Aorta (tissue), 5 donors: ENCODE measurements at regions of chr5 and their contacts with region 1.

Region 1: GRCh38 chr5:134586866-134587524 is 45.6 kb downstream of the SAR1B start:
- DNase-seq: peak; percentile 90 to 96
- ATAC-seq: peak; percentile 93
- H3K4me3 ChIP-seq: no peak overlapping the region
- H3K27ac ChIP-seq: peak overlapping the region in 1 of 2 donors; percentile 18
- H3K4me1 ChIP-seq: no peaks in the 10 kb centered on the region
- H3K27me3 ChIP-seq: no peaks in the 10 kb centered on the region

Region 2: DNA sequence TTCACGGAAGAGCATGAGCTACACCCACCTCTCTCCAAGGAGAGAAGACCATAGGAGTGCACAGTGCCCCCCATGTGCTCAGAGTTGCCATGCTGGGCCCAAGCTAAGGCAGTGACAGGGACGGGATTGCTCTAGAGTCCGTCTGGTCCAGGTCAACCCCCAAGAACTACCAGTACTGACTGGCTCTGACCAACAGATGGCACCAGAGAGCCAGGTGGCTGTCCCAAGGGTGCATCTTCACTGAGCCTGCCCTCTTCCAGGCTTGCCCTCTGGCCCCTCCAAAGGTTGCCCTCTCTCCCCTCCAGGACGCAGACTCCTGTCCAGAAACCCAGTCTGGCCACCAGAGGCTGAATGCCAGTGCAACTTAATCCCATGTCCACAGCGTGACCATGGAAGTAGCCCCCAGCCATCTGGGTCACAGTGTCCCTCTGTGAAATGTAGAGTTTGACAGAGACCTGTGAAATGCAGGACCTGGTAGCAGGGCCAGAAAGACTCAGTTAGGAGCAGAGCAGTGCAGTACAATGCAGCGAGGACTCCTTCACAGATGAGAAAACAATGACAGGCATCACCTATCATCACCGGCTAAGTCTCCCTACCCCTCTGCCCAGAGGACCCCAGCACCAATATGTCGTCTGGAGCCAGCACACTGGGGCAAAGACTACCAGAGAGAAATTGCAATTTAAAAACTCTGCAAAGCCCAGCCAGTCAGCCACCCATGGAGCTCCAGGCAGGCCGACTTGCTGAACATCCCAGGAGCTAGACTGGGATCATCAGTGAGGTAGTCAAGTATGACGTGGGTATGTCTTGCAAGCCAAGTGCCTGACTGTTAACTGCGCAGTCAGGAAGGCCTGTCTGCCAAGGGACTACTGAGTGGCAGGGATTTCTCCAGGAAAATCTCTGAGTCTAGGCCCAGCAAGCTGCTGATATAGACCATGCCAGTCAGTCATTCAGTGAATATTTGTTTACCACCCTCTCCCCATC is 402.6 kb before region 1 on chr5:
- intact Hi-C with region 1: loop called in 1 of 2 experiments (anchors 10 kb)
- DNase-seq: peak; percentile 77 to 84
- ATAC-seq: peak; percentile 90
- H3K4me3 ChIP-seq: no peak overlapping the region
- H3K27ac ChIP-seq: no peak overlapping the region
- H3K4me1 ChIP-seq: no peaks in the 10 kb centered on the region
- H3K27me3 ChIP-seq: no peaks in the 10 kb centered on the region

Region 3: GRCh38 chr5:134304311-134304710 is 282.7 kb before region 1 on chr5:
- intact Hi-C with region 1: loop called (anchors 5 kb)
- DNase-seq: no peak
- ATAC-seq: no peak
- H3K4me3 ChIP-seq: no peak overlapping the region
- H3K27ac ChIP-seq: no peak overlapping the region
- H3K4me1 ChIP-seq: no peaks in the 10 kb centered on the region
- H3K27me3 ChIP-seq: no peaks in the 10 kb centered on the region

Region 4: GRCh38 chr5:134370871-134371833 is 215.8 kb before region 1 on chr5 and contains the start of gene UBE2B:
- intact Hi-C with region 1: loop called in 1 of 2 experiments (anchors 5 kb)
- DNase-seq: peak; percentile 98 to 99
- ATAC-seq: peak; percentile 99
- H3K4me3 ChIP-seq: peak within 1 kb of the TSS; percentile 65 to 79
- H3K27ac ChIP-seq: peak within 1 kb of the TSS; percentile 86 to 99
- H3K4me1 ChIP-seq: no peaks in the 10 kb centered on the region
- H3K27me3 ChIP-seq: no peaks in the 10 kb centered on the region
- total RNA-seq, gene UBE2B: 96.6 to 99.2 TPM

Region 5: DNA sequence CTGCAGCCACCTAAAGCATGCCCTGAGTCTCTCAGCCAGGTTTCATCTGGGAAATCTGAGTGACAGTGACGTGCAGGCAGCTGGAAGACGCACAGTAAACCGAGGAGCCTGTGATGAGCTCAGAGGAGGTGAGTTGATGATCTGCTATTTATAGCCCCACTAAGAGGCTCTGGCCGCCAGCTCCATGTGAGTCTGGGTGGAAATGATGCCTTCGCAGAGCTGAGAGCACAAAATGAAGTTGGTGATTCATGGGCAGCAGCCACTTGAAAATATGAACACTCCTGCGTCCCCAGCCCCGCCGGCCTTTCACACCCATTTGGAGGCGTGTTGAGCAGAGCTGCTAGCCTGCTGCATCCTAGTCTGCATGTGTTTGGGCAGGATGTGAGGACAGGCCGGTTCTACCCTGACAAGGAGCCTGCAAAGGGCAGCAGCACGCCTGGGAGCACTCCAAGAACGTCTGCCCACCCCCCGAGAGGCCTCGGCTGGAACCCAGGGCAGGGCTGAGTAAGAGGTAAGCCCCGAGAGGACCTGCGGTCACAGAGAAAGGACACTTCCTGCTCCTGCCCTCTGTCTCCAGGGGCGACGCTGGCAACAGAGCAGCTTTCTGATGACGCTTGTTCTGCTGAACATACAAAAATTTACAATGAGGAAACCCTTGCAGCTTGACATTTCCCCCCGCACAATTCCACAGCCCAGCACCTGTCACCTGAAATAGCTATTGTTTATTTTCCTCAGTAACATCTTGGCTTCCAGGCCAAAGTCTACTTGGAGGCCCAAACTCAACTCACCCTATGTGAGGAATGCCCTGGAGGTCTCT is 150.3 kb before region 1 on chr5:
- intact Hi-C with region 1: no loop called
- DNase-seq: peak; percentile 82 to 86
- ATAC-seq: peak; percentile 53
- H3K4me3 ChIP-seq: no peak overlapping the region
- H3K27ac ChIP-seq: peak overlapping the region in 1 of 2 donors; percentile 28
- H3K4me1 ChIP-seq: no peaks in the 10 kb centered on the region
- H3K27me3 ChIP-seq: no peaks in the 10 kb centered on the region

Region 6: DNA sequence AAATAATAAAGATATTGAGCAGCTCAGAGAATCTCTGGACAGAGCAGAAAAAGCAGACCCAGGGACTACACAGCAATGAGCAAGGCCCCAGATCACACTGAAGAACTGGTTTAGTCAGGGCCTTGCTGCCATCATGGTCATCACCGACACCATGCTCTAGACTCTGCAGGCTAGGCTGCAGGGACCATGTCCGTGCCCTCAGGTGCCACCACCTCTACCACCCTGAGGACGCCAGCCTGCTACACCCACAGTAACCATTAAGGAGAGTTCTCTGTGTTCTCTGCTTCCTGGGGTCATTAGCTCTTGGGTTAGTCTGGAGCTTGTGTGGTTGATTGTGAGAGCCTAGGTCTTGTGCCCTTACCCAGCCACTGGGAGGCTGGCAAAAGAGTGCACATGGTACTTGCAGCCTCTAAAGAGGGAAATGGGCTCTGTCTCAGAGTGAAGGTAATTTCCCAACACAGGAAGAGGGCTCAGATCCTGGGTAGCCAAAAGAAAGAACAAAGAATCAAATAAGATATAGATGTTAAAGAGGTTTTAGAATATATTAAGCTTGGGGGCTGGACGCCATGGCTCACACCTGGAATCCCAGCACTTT is 93.4 kb before region 1 on chr5:
- intact Hi-C with region 1: no loop called
- DNase-seq: peak in 1 of 2 donors; percentile 36
- ATAC-seq: no peak
- H3K4me3 ChIP-seq: no peak overlapping the region
- H3K27ac ChIP-seq: no peak overlapping the region
- H3K4me1 ChIP-seq: no peaks in the 10 kb centered on the region
- H3K27me3 ChIP-seq: no peaks in the 10 kb centered on the region

Region 7: GRCh38 chr5:135063631-135064570 is 476.9 kb after region 1 on chr5:
- intact Hi-C with region 1: no loop called
- DNase-seq: peak in 1 of 2 donors; percentile 65
- ATAC-seq: no peak
- H3K4me3 ChIP-seq: no peak overlapping the region
- H3K27ac ChIP-seq: no peak overlapping the region
- H3K4me1 ChIP-seq: no peaks in the 10 kb centered on the region
- H3K27me3 ChIP-seq: no peaks in the 10 kb centered on the region